ENCODE measurements at regions of chr12 and their contacts with region 1.

Region 1: GRCh38 chr12:55073043-55074022 is 52.9 kb upstream of the OR9K2 start:
- DNase-seq: peak; percentile 58 to 83 (median 69)
- H3K4me3 ChIP-seq: no peak overlapping the region
- H3K4me3 Mint-ChIP-seq: no peak overlapping the region
- H3K27ac ChIP-seq: no peak overlapping the region
- H3K27ac Mint-ChIP-seq: peak overlapping the region in 1 of 8 donors; percentile 12
- H3K4me1 ChIP-seq: no peaks in the 10 kb centered on the region
- H3K4me1 Mint-ChIP-seq: peaks cover 0 to 4% (median 2%) of the 10 kb centered on the region in 3 donors
- H3K27me3 ChIP-seq: no peaks in the 10 kb centered on the region
- H3K27me3 Mint-ChIP-seq: peaks cover 26 to 43% of the 10 kb centered on the region in 2 donors

Region 2: GRCh38 chr12:54723379-54724256 is 349.7 kb before region 1 on chr12:
- CTCF ChIA-PET with region 1: interaction called, 11 read pairs
- POLR2A ChIA-PET with region 1: no interaction called
- DNase-seq: peak in 4 of 5 donors; percentile 7 to 49 (median 28)
- H3K4me3 ChIP-seq: no peak overlapping the region
- H3K4me3 Mint-ChIP-seq: no peak overlapping the region
- H3K27ac ChIP-seq: no peak overlapping the region
- H3K27ac Mint-ChIP-seq: peak overlapping the region in 1 of 8 donors; percentile 30
- H3K4me1 ChIP-seq: peaks cover 3% of the 10 kb centered on the region
- H3K4me1 Mint-ChIP-seq: peaks cover 11 to 31% (median 25%) of the 10 kb centered on the region in 3 donors
- H3K27me3 ChIP-seq: no peaks in the 10 kb centered on the region
- H3K27me3 Mint-ChIP-seq: peaks cover 8 to 17% of the 10 kb centered on the region in 2 donors

Region 3: DNA sequence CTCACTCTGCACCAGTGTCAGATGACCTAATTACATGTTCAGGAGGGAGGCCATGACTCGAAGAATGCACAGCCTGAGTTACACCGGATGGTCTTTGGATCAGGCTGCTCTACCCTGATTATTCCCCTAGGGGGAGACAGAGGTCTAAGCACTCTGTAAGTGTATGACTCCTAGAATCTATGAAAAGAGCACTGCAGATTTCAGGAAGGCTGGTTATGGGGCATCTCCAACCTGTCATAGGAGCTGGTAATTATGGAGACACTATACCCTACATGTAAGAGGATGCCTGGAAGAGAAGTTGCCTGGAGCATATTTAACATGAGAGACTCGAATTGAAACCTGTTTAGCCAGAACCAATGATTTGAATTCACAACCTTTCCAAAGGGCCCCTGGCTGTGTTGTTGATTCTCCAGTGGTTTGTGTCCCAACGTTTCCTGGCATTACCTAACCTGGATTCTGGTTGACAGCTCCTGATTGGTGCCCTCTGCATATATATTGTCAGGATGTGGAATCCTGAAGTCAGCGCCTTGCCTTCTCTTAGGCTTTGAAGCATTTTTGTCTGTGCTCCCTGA is 219.3 kb before region 1 on chr12 and contains the start of gene MUCL1:
- CTCF ChIA-PET with region 1: interaction called, 14 read pairs
- POLR2A ChIA-PET with region 1: no interaction called
- DNase-seq: peak; percentile 41 to 72 (median 55)
- H3K4me3 ChIP-seq: no peak within 1 kb of the TSS
- H3K4me3 Mint-ChIP-seq: no peak within 1 kb of the TSS
- H3K27ac ChIP-seq: no peak within 1 kb of the TSS
- H3K27ac Mint-ChIP-seq: peak within 1 kb of the TSS in 3 of 8 donors; percentile 9 to 25 (median 13)
- H3K4me1 ChIP-seq: no peaks in the 10 kb centered on the region
- H3K4me1 Mint-ChIP-seq: peaks cover 0 to 4% (median 2%) of the 10 kb centered on the region in 3 donors
- H3K27me3 ChIP-seq: no peaks in the 10 kb centered on the region
- H3K27me3 Mint-ChIP-seq: peaks cover 0 to 13% of the 10 kb centered on the region in 2 donors
- total RNA-seq, gene MUCL1: not detected

Region 4: GRCh38 chr12:54984658-54985376 is 88.5 kb before region 1 on chr12 and contains the start of gene TESPA1:
- CTCF ChIA-PET with region 1: interaction called, 32 read pairs
- POLR2A ChIA-PET with region 1: no interaction called
- DNase-seq: peak; percentile 69 to 92 (median 86)
- H3K4me3 ChIP-seq: peak within 1 kb of the TSS; percentile 80
- H3K4me3 Mint-ChIP-seq: peak within 1 kb of the TSS; percentile 90 to 94 (median 91)
- H3K27ac ChIP-seq: peak within 1 kb of the TSS; percentile 79
- H3K27ac Mint-ChIP-seq: peak within 1 kb of the TSS; percentile 97 to 99 (median 97)
- H3K4me1 ChIP-seq: peaks cover 82% of the 10 kb centered on the region
- H3K4me1 Mint-ChIP-seq: peaks cover 81 to 95% (median 93%) of the 10 kb centered on the region in 3 donors
- H3K27me3 ChIP-seq: no peaks in the 10 kb centered on the region
- H3K27me3 Mint-ChIP-seq: no peaks in the 10 kb centered on the region
- total RNA-seq, gene TESPA1: 77.3 to 80.6 TPM

Region 5: GRCh38 chr12:55060470-55060869 is 12.9 kb before region 1 on chr12:
- CTCF ChIA-PET with region 1: interaction called, 16 read pairs
- POLR2A ChIA-PET with region 1: no interaction called
- DNase-seq: no peak
- H3K4me3 ChIP-seq: no peak overlapping the region
- H3K4me3 Mint-ChIP-seq: no peak overlapping the region
- H3K27ac ChIP-seq: no peak overlapping the region
- H3K27ac Mint-ChIP-seq: no peak overlapping the region
- H3K4me1 ChIP-seq: no peaks in the 10 kb centered on the region
- H3K4me1 Mint-ChIP-seq: no peaks in the 10 kb centered on the region
- H3K27me3 ChIP-seq: no peaks in the 10 kb centered on the region
- H3K27me3 Mint-ChIP-seq: peaks cover under 1 to 22% of the 10 kb centered on the region in 2 donors

Measured in CD8-positive, alpha-beta memory T cell (primary cell).